ENCODE measurements at regions of chr1 and their contacts with region 1.

Region 1: GRCh38 chr1:66446261-66447001 is 87.5 kb upstream of the SGIP1 start:
- DNase-seq: no peak
- H3K4me3 ChIP-seq: no peak overlapping the region
- H3K27ac ChIP-seq: no peak overlapping the region
- H3K4me1 ChIP-seq: peaks cover 0 to 34% (median 24%) of the 10 kb centered on the region in 4 donors
- H3K27me3 ChIP-seq: no peaks in the 10 kb centered on the region
- CTCF ChIP-seq: peak; percentile 77 to 87 (median 81)
- EP300 ChIP-seq: no peak
- POLR2A ChIP-seq: no peak

Region 2: GRCh38 chr1:65846866-65847265 is 599.6 kb before region 1 on chr1:
- intact Hi-C with region 1: no loop called
- DNase-seq: no peak
- H3K4me3 ChIP-seq: no peak overlapping the region
- H3K27ac ChIP-seq: no peak overlapping the region
- H3K4me1 ChIP-seq: peaks cover 0 to 7% (median 0%) of the 10 kb centered on the region in 4 donors
- H3K27me3 ChIP-seq: no peaks in the 10 kb centered on the region
- CTCF ChIP-seq: no peak
- EP300 ChIP-seq: no peak
- POLR2A ChIP-seq: no peak

Region 3: GRCh38 chr1:65958561-65959350 is 487.7 kb before region 1 on chr1:
- intact Hi-C with region 1: loop called (anchors 1 kb)
- DNase-seq: no peak
- H3K4me3 ChIP-seq: no peak overlapping the region
- H3K27ac ChIP-seq: no peak overlapping the region
- H3K4me1 ChIP-seq: peaks cover 0 to 14% (median 12%) of the 10 kb centered on the region in 4 donors
- H3K27me3 ChIP-seq: no peaks in the 10 kb centered on the region
- CTCF ChIP-seq: peak; percentile 58 to 81 (median 66)
- EP300 ChIP-seq: no peak
- POLR2A ChIP-seq: no peak

Region 4: GRCh38 chr1:66176012-66176715 is 270.3 kb before region 1 on chr1:
- intact Hi-C with region 1: loop called (anchors 10 kb)
- DNase-seq: no peak
- H3K4me3 ChIP-seq: no peak overlapping the region
- H3K27ac ChIP-seq: peak overlapping the region in 1 of 4 donors; percentile 58
- H3K4me1 ChIP-seq: peaks cover 0 to 35% (median 27%) of the 10 kb centered on the region in 4 donors
- H3K27me3 ChIP-seq: no peaks in the 10 kb centered on the region
- CTCF ChIP-seq: no peak
- EP300 ChIP-seq: no peak
- POLR2A ChIP-seq: no peak

Region 5: GRCh38 chr1:66253330-66253921 is 193.0 kb before region 1 on chr1:
- intact Hi-C with region 1: loop called (anchors 1 kb)
- DNase-seq: no peak
- H3K4me3 ChIP-seq: no peak overlapping the region
- H3K27ac ChIP-seq: no peak overlapping the region
- H3K4me1 ChIP-seq: peaks cover 0 to 20% (median 7%) of the 10 kb centered on the region in 4 donors
- H3K27me3 ChIP-seq: no peaks in the 10 kb centered on the region
- CTCF ChIP-seq: peak; percentile 60 to 80 (median 73)
- EP300 ChIP-seq: no peak
- POLR2A ChIP-seq: no peak

Region 6: GRCh38 chr1:66271216-66271903 is 175.1 kb before region 1 on chr1:
- intact Hi-C with region 1: loop called (anchors 5 kb)
- DNase-seq: peak; percentile 96
- H3K4me3 ChIP-seq: peak overlapping the region in 3 of 4 donors; percentile 7 to 31 (median 26)
- H3K27ac ChIP-seq: peak overlapping the region; percentile 79 to 87 (median 85)
- H3K4me1 ChIP-seq: peaks cover 0 to 69% (median 39%) of the 10 kb centered on the region in 4 donors
- H3K27me3 ChIP-seq: no peaks in the 10 kb centered on the region
- CTCF ChIP-seq: no peak
- EP300 ChIP-seq: peak; percentile 88 to 99 (median 98)
- POLR2A ChIP-seq: no peak

Region 7: DNA sequence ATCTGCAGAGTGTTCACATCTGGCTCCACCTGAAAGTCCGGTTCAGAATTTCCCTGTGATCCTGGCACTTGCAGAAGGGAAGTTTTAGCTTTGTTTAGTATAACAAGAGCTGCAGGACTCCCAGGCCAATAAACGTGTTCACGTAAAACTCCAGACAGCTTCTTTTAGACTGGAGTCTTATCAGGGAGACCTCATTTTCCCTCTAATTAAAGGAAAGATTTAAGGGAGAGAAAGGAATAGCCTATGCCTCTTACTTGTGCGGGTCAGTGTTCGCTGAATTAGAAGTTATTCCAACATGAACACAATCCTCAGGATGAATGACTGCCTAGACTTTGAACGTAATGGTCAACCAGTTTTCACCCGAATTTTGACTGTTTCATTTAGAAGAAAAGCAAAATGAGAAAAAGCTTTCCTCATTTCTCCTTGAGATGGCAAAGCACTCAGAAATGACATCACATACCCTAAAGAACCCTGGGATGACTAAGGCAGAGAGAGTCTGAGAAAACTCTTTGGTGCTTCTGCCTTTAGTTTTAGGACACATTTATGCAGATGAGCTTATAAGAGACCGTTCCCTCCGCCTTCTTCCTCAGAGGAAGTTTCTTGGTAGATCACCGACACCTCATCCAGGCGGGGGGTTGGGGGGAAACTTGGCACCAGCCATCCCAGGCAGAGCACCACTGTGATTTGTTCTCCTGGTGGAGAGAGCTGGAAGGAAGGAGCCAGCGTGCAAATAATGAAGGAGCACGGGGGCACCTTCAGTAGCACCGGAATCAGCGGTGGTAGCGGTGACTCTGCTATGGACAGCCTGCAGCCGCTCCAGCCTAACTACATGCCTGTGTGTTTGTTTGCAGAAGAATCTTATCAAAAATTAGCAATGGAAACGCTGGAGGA is 114.5 kb before region 1 on chr1:
- intact Hi-C with region 1: loop called (anchors 5 kb)
- DNase-seq: peak; percentile 82
- H3K4me3 ChIP-seq: peak overlapping the region; percentile 28 to 54 (median 48)
- H3K27ac ChIP-seq: peak overlapping the region; percentile 75 to 89 (median 83)
- H3K4me1 ChIP-seq: peaks cover 0 to 46% (median 34%) of the 10 kb centered on the region in 4 donors
- H3K27me3 ChIP-seq: no peaks in the 10 kb centered on the region
- CTCF ChIP-seq: peak in 3 of 4 experiments; percentile 25 to 57 (median 29)
- EP300 ChIP-seq: peak; percentile 3 to 80 (median 78)
- POLR2A ChIP-seq: peak in 1 of 2 donors; percentile 46

Measured in sigmoid colon (tissue), 7 donors.